MCF 10A (cell line): ENCODE measurements at regions of chr4 and their contacts with region 1.

Region 1: GRCh38 chr4:165327211-165328100 is at the start of gene MSMO1:
- DNase-seq: peak; percentile 99
- H3K4me3 Mint-ChIP-seq: no peak within 1 kb of the TSS
- H3K27ac Mint-ChIP-seq: no peak within 1 kb of the TSS
- H3K4me1 Mint-ChIP-seq: peaks cover 37% of the 10 kb centered on the region
- H3K27me3 Mint-ChIP-seq: no peaks in the 10 kb centered on the region
- CTCF ChIP-seq: no peak
- total RNA-seq, gene MSMO1: 80.4 and 94.9 TPM in 2 replicates

Region 2: GRCh38 chr4:164639001-164639400 is 688.5 kb before region 1 on chr4:
- CTCF ChIA-PET with region 1: no interaction called
- POLR2A ChIA-PET with region 1: no interaction called
- intact Hi-C with region 1: no loop called
- DNase-seq: peak; percentile 34
- H3K4me3 Mint-ChIP-seq: no peak overlapping the region
- H3K27ac Mint-ChIP-seq: peak overlapping the region; percentile 57
- H3K4me1 Mint-ChIP-seq: peaks cover 19% of the 10 kb centered on the region
- H3K27me3 Mint-ChIP-seq: no peaks in the 10 kb centered on the region
- CTCF ChIP-seq: no peak

Region 3: GRCh38 chr4:165112368-165113139 is 214.9 kb before region 1 on chr4 and contains the start of gene TMEM192:
- CTCF ChIA-PET with region 1: interaction called, 3 read pairs
- POLR2A ChIA-PET with region 1: interaction called, 42 read pairs
- intact Hi-C with region 1: loop called (anchors 5 kb)
- DNase-seq: peak; percentile 95
- H3K4me3 Mint-ChIP-seq: peak within 1 kb of the TSS; percentile 97
- H3K27ac Mint-ChIP-seq: peak within 1 kb of the TSS; percentile 94
- H3K4me1 Mint-ChIP-seq: peaks cover 9% of the 10 kb centered on the region
- H3K27me3 Mint-ChIP-seq: no peaks in the 10 kb centered on the region
- CTCF ChIP-seq: no peak
- total RNA-seq, gene TMEM192: 26.6 and 31.6 TPM in 2 replicates

Region 4: DNA sequence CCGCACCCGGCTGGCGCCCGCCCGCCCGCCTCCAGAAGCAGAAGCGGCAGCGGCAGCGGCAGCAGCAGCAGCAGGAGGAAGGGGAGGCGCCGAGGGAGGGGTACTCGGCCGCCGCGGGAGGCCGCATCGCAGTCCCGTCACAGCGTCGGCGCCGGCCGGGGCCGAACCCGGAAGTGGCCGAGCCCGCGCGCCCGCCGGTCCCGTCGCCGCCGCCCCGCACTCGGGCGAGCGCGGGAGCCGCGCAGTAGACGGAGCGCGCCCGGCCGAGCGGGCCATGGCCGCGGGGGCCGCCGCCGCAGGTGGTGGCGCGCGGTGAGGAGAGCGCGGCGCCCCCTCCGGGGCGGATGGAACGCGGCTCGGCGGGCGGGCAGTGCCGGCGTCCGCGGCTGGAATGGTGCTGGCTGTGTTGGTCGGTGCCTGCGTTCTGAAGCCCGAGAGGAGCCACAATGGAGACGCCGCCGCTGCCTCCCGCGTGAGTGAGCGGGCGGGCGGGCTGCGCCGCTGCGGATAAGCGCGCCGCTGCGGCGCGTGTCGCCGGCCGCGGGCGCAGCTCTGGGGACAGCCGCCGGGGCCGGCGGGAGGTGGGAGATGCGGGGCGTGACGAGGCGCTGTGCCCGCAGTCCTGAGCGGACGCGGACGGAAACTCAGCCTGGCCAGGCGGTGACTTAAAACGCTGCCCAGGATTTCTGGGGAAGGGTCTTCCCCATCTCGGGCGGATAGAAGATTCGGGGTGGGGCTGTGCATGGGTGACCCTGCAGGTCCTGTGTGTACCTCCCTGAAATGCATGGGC is 119.8 kb before region 1 on chr4 and contains the start of gene KLHL2:
- CTCF ChIA-PET with region 1: interaction called, 3 read pairs
- POLR2A ChIA-PET with region 1: interaction called, 146 read pairs
- intact Hi-C with region 1: loop called (anchors 2 kb)
- DNase-seq: peak; percentile 72
- H3K4me3 Mint-ChIP-seq: peak within 1 kb of the TSS; percentile 73
- H3K27ac Mint-ChIP-seq: peak within 1 kb of the TSS; percentile 90
- H3K4me1 Mint-ChIP-seq: peaks cover 61% of the 10 kb centered on the region
- H3K27me3 Mint-ChIP-seq: no peaks in the 10 kb centered on the region
- CTCF ChIP-seq: no peak
- total RNA-seq, gene KLHL2: 37.1 and 40.0 TPM in 2 replicates

Region 5: GRCh38 chr4:165234766-165235165 is 92.7 kb before region 1 on chr4:
- CTCF ChIA-PET with region 1: no interaction called
- POLR2A ChIA-PET with region 1: interaction called, 27 read pairs
- intact Hi-C with region 1: no loop called
- DNase-seq: no peak
- H3K4me3 Mint-ChIP-seq: no peak overlapping the region
- H3K27ac Mint-ChIP-seq: no peak overlapping the region
- H3K4me1 Mint-ChIP-seq: peaks cover 20% of the 10 kb centered on the region
- H3K27me3 Mint-ChIP-seq: no peaks in the 10 kb centered on the region
- CTCF ChIP-seq: no peak

Region 6: DNA sequence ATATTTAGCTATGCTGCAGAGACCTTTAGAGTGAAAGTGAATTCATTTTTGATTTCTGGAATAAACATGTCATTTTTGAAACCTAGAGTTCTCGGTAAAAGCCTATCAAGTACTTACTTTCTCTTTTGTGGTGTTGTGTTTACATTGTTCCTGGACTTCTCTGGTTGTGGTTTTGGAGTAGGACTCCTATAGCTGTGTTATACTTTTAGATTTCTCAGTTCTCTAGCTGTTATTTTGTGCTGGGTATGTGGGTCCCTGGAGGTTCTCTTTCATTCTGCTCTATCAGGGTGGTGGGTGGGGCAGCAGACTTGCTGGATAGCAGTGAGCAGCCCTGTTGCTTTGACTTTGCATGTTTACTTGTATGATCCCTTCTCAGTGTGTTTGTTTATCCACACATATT is 25.6 kb before region 1 on chr4:
- CTCF ChIA-PET with region 1: no interaction called
- POLR2A ChIA-PET with region 1: interaction called, 15 read pairs
- intact Hi-C with region 1: no loop called
- DNase-seq: no peak
- H3K4me3 Mint-ChIP-seq: peak overlapping the region; percentile 67
- H3K27ac Mint-ChIP-seq: peak overlapping the region; percentile 49
- H3K4me1 Mint-ChIP-seq: peaks cover 11% of the 10 kb centered on the region
- H3K27me3 Mint-ChIP-seq: no peaks in the 10 kb centered on the region
- CTCF ChIP-seq: no peak

Region 7: GRCh38 chr4:165343353-165344191 is 16.1 kb after region 1 on chr4:
- CTCF ChIA-PET with region 1: interaction called, 3 read pairs
- POLR2A ChIA-PET with region 1: interaction called, 11 read pairs
- intact Hi-C with region 1: no loop called
- DNase-seq: no peak
- H3K4me3 Mint-ChIP-seq: no peak overlapping the region
- H3K27ac Mint-ChIP-seq: no peak overlapping the region
- H3K4me1 Mint-ChIP-seq: no peaks in the 10 kb centered on the region
- H3K27me3 Mint-ChIP-seq: no peaks in the 10 kb centered on the region
- CTCF ChIP-seq: no peak

Region 8: DNA sequence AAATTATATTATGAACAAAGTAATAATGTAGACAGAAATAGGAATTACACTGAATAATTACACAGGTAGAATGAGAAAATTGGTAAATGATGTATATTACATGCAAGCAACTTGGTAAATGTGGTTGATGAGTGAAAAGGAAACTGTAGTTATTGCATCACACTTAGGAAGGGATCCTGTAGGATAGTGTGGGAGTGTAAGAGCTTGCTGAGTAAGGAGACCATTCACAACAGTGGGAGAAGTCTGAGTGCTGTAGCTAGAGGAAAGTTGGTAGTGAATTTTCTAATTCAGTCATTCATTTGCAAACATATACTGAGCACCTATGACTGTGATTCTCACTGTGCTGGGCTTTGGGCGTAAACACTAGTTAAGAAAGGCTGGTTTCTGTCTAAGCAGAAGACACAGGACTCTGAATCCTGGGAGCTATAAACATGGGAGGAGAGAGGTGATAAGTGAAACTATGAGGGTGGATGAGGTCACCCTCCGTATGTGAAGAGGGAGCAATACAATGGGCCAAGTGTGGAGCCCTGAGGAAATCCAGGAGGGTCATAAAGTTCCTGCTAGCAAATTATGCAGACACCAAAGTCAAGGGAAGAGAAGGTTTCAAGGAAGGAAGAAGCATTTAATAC is 37.1 kb after region 1 on chr4:
- CTCF ChIA-PET with region 1: interaction called, 3 read pairs
- POLR2A ChIA-PET with region 1: interaction called, 13 read pairs
- intact Hi-C with region 1: loop called (anchors 2 kb)
- DNase-seq: peak; percentile 77
- H3K4me3 Mint-ChIP-seq: no peak overlapping the region
- H3K27ac Mint-ChIP-seq: no peak overlapping the region
- H3K4me1 Mint-ChIP-seq: peaks cover 33% of the 10 kb centered on the region
- H3K27me3 Mint-ChIP-seq: no peaks in the 10 kb centered on the region
- CTCF ChIP-seq: no peak

Region 9: GRCh38 chr4:165945991-165946390 is 618.5 kb after region 1 on chr4:
- CTCF ChIA-PET with region 1: no interaction called
- POLR2A ChIA-PET with region 1: no interaction called
- intact Hi-C with region 1: no loop called
- DNase-seq: no peak
- H3K4me3 Mint-ChIP-seq: no peak overlapping the region
- H3K27ac Mint-ChIP-seq: no peak overlapping the region
- H3K4me1 Mint-ChIP-seq: no peaks in the 10 kb centered on the region
- H3K27me3 Mint-ChIP-seq: no peaks in the 10 kb centered on the region
- CTCF ChIP-seq: no peak